Activated naive CD4-positive, alpha-beta T cell treated with anti-CD3 and anti-CD28 coated beads for 36 hours (primary cell): ENCODE measurements at regions of chr11 and their contacts with region 1.

Region 1: GRCh38 chr11:125111343-125112207 is at the start of gene TMEM218:
- DNase-seq: peak; percentile 98
- H3K4me3 Mint-ChIP-seq: peak within 1 kb of the TSS; percentile 84
- H3K27ac Mint-ChIP-seq: peak within 1 kb of the TSS; percentile 79
- H3K4me1 Mint-ChIP-seq: peaks cover 16% of the 10 kb centered on the region
- H3K27me3 Mint-ChIP-seq: no peaks in the 10 kb centered on the region
- total RNA-seq, gene TMEM218: 11.5 to 12.6 TPM

Region 2: GRCh38 chr11:124622531-124623451 is 488.8 kb before region 1 on chr11 and contains the start of gene TBRG1:
- CTCF ChIA-PET with region 1: no interaction called
- intact Hi-C with region 1: loop called (anchors 5 kb)
- DNase-seq: peak; percentile 88
- H3K4me3 Mint-ChIP-seq: peak within 1 kb of the TSS; percentile 96
- H3K27ac Mint-ChIP-seq: peak within 1 kb of the TSS; percentile 96
- H3K4me1 Mint-ChIP-seq: peaks cover 22% of the 10 kb centered on the region
- H3K27me3 Mint-ChIP-seq: no peaks in the 10 kb centered on the region
- total RNA-seq, gene TBRG1: 28.3 to 28.6 TPM

Region 3: DNA sequence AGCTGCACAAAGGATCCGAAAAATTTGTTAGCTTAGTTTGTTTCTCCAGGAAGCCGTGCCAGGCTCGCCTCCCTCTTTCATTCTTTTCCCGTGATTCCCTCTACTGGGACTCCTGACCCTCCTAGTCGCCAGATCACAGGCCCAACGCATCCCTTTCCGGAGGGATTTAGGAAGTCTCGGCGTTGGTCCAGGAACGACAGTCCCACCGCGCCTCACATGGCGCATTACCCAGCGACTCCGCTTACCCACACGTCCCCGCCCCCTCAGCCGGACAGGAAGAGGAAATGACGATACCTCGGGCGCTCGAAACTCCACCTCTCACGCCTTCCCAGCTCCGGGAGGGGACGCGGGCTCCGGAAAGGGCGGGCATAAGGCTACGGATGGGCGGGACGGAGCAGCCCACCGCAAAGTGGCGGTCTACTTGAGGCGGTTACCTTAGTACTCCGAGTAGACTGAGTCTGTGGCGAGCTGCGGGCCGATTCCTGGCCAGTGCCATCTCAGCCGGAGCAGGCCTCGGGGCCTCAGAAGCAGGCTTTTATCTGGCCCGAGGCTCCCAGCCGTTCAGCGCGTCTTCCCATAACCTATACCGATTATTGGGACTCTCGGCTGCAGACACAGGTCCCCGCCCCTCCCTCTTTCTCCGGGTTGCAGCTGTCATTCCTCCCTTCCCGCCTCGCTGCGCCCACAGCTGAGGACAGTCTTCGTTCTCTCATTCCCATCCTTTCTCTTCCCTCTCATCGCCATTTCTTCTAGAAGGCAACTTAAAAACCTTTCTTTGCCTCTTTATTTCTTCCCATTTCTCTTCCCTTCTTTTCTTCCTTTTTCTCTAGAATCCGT is 157.6 kb before region 1 on chr11 and contains the start of gene CCDC15:
- CTCF ChIA-PET with region 1: interaction called, 3 read pairs
- intact Hi-C with region 1: loop called (anchors 1 kb)
- DNase-seq: peak; percentile 97
- H3K4me3 Mint-ChIP-seq: no peak within 1 kb of the TSS
- H3K27ac Mint-ChIP-seq: no peak within 1 kb of the TSS
- H3K4me1 Mint-ChIP-seq: peaks cover 7% of the 10 kb centered on the region
- H3K27me3 Mint-ChIP-seq: no peaks in the 10 kb centered on the region
- total RNA-seq, gene CCDC15: 6.1 to 7.3 TPM

Region 4: DNA sequence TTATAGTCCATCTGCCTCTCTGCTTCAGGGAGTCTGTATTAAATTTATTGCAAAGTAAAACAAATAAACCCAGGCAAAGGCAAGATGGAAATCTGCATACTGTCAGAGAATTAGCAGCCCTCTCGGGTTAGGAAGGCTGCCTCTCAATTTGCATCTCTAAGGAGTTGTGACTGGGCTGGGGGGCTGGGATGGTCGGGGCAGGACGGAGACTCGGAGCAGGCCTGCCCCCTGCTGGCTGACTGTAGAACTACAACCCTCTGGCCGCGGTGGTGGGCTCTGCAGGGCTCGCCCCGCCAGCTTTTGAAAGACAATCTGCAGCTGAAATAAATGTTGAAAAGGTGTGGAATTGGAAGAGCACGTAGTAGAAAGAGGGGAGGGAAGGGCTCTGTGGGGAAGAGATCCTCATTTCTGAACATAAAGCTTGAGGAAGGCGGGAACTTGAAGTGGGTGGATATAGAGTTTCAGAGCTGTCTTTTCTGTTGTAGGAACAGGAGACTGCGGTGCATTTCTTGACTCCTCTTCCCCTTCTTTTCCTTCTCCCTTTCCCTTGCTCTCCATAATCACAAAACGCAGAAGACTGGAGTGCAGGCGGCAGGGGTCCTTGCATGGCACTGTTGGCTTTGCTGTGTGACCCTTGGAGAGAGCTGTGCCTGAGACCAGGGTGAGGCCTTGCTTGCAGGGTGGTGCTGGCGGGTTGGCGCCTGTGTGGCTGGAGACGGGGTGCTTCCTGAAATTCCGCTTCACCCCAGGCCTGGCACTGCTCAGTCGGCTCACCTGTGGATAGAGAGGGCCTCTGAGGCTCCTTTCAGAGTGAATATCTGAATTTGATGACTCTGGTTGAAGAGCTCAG is 30.3 kb after region 1 on chr11:
- CTCF ChIA-PET with region 1: interaction called, 11 read pairs
- intact Hi-C with region 1: no loop called
- DNase-seq: peak; percentile 46
- H3K4me3 Mint-ChIP-seq: no peak overlapping the region
- H3K27ac Mint-ChIP-seq: no peak overlapping the region
- H3K4me1 Mint-ChIP-seq: peaks cover 3% of the 10 kb centered on the region
- H3K27me3 Mint-ChIP-seq: peaks cover 15% of the 10 kb centered on the region

Region 5: DNA sequence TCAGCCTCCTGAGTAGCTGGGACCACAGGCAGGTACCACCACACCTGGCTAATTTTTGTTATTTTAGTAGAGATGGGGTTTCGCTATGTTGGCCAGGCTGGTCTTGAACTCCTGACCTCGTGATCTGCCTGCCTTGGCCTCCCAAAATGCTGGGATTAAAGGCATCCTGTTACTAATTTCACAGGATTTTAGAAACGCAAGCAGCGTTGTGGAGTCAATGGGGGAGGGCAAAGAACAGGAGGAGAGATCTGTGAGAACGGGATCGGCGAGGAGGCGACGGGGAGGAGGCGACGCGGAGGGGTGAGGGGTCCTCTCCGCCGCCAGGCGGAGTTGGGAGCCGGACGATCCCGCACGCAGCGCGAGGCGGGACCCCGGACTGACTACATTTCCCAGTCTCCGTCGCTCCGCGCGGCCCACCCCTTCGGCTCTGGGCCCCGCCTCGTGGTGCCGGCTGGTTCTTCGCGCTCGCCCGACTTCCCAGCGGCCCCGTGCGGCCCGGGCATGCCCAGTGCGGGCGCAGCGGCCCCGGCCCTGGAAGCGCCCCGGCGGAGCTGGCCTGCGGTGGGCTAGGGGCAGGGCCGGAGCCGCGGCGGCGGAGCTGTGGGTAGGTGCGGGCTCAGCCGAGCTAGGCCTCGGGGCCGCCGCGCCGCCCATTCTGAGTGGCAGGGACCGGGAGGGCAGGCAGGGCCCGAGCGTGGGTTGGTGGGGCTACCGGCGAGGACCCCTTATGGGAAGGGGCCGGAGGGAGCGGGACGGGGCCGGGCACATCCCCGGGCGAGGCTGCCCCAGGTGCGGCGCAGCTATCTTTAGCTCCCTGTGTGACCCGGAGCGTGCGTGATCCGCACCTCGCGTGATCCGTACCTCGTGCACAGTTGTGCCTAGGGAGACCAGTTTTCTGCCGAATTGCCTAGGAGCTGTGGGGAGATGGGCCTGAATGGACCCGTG is 457.7 kb after region 1 on chr11 and contains the start of gene EI24:
- CTCF ChIA-PET with region 1: interaction called, 4 read pairs
- intact Hi-C with region 1: loop called (anchors 1 kb)
- DNase-seq: peak; percentile 91
- H3K4me3 Mint-ChIP-seq: peak within 1 kb of the TSS; percentile 94
- H3K27ac Mint-ChIP-seq: peak within 1 kb of the TSS; percentile 92
- H3K4me1 Mint-ChIP-seq: peaks cover 32% of the 10 kb centered on the region
- H3K27me3 Mint-ChIP-seq: no peaks in the 10 kb centered on the region
- total RNA-seq, gene EI24: 28.8 to 33.0 TPM

Region 6: GRCh38 chr11:126062679-126063506 is 951.3 kb after region 1 on chr11 and contains the start of gene CDON:
- CTCF ChIA-PET with region 1: no interaction called
- intact Hi-C with region 1: loop called (anchors 5 kb)
- DNase-seq: peak; percentile 92
- H3K4me3 Mint-ChIP-seq: peak within 1 kb of the TSS; percentile 77
- H3K27ac Mint-ChIP-seq: peak within 1 kb of the TSS; percentile 92
- H3K4me1 Mint-ChIP-seq: peaks cover 5% of the 10 kb centered on the region
- H3K27me3 Mint-ChIP-seq: peaks cover 17% of the 10 kb centered on the region
- total RNA-seq, gene CDON: 2.6 to 3.5 TPM